HEK293 (cell line): ENCODE measurements at regions of chr9 and their contacts with region 1.

Region 1: GRCh38 chr9:129737479-129738274 is 15.2 kb downstream of the PTGES start:
- H3K4me3 ChIP-seq: peak overlapping the region; percentile 40
- H3K27ac ChIP-seq: no peak overlapping the region; the same call in 1 of the 2 replicates
- H3K4me1 ChIP-seq: no peaks in the 10 kb centered on the region
- CTCF ChIP-seq: peak; percentile 90

Region 2: DNA sequence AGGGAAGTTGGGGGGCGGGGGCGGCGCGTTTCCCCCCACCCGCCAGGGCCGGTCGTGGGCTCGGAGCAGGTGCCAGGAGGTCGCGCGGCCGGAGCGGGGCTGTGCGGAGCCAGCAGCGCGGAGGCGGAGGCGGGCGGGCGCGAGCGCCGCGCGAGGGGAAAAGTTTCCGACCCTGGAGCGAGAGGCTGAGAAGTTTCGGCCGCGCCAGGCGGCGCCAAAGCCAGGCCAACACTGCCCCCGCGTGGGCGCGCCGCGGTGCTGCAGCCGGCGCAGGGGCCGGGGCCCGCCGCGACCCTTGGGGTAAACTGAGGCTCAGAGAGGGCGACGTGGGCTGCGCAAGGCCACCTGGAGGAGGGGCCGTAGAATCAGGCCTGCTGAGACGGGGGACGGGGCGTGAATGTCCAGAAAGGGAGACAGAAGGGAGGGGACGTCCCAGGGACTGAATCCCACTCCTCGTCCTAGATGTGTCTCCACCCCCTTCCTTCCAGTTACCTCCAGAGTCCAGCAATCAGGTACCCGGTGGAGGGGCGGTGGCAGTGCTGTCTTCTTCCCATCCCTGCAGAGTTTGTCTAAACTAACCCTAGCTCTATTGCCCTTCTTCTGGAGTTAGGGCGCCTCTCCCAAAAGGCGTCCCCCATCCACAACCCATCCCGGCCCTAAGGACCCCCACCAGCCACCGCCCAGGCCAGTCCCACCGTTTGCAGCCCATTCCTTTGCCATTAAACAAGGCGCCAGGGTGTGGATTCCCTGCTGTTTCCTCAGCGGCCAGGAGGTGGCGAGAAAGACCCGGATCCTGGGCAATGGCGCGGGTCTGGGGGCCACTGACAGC is 127.0 kb before region 1 on chr9:
- CTCF ChIA-PET with region 1: no interaction called
- POLR2A ChIA-PET with region 1: no interaction called
- H3K4me3 ChIP-seq: peak overlapping the region; percentile 44
- H3K27ac ChIP-seq: peak overlapping the region; percentile 49; the same call in 1 of the 2 replicates
- H3K4me1 ChIP-seq: no peaks in the 10 kb centered on the region; the same call in 1 of the 2 replicates
- CTCF ChIP-seq: peak; percentile 76; the same call in 1 of the 2 replicates

Region 3: GRCh38 chr9:129641746-129642513 is 95.7 kb before region 1 on chr9 and contains the start of gene ASB6:
- CTCF ChIA-PET with region 1: interaction called, 16 read pairs
- POLR2A ChIA-PET with region 1: interaction called, 3 read pairs
- H3K4me3 ChIP-seq: peak within 1 kb of the TSS; percentile 79
- H3K27ac ChIP-seq: peak within 1 kb of the TSS; percentile 70
- H3K4me1 ChIP-seq: peaks cover 11% of the 10 kb centered on the region
- CTCF ChIP-seq: peak; percentile 100

Region 4: GRCh38 chr9:129720181-129720864 is 17.4 kb before region 1 on chr9:
- CTCF ChIA-PET with region 1: interaction called, 124 read pairs
- POLR2A ChIA-PET with region 1: no interaction called
- H3K4me3 ChIP-seq: no peak overlapping the region
- H3K27ac ChIP-seq: no peak overlapping the region
- H3K4me1 ChIP-seq: no peaks in the 10 kb centered on the region
- CTCF ChIP-seq: peak; percentile 40; the same call in 1 of the 2 replicates

Region 5: DNA sequence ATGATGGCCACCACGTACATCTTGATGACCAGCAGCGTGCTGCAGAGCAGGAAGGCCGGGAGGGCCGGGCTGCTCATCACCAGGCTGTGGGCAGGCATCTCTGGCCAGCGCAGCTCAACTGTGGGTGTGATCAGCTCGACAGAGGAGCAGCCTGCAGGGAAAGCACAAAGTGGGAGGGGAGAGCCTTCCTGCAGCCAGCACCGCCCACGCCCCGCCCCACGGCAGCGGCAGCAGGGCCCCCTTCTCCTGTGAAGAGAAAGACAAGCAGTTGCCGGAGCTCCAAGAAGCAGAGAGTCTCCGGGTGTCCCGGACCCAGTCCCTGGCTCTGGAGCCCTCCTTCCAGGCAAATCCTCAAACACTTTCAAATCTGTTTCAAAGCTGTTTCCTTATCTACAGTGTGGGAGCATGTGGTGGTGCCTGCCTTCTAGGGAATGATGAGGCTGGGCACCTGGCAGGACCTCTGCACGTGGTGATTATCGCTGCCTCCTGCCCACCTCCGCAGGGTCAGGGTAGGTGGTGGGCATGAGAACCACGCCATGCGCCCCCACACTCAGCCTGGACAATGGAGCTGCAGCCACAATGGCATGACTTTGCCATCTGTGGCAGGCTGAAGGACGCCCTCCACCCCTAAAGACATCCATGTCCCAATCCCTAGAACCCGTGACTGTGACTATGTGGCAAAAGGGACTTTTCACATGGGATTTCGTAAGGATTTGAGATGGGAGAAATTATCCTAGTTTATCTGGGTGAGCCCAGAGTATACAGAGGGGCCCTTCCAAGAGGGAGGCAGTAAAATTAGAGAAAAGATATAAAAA is 15.4 kb after region 1 on chr9 and contains the start of gene PTGES:
- CTCF ChIA-PET with region 1: interaction called, 62 read pairs
- POLR2A ChIA-PET with region 1: interaction called, 12 read pairs
- H3K4me3 ChIP-seq: no peak within 1 kb of the TSS
- H3K27ac ChIP-seq: no peak within 1 kb of the TSS
- H3K4me1 ChIP-seq: no peaks in the 10 kb centered on the region
- CTCF ChIP-seq: no peak

Region 6: GRCh38 chr9:129769669-129770068 is 32.0 kb after region 1 on chr9:
- CTCF ChIA-PET with region 1: interaction called, 27 read pairs
- POLR2A ChIA-PET with region 1: interaction called, 3 read pairs
- H3K4me3 ChIP-seq: no peak overlapping the region
- H3K27ac ChIP-seq: no peak overlapping the region
- H3K4me1 ChIP-seq: no peaks in the 10 kb centered on the region
- CTCF ChIP-seq: no peak

Region 7: DNA sequence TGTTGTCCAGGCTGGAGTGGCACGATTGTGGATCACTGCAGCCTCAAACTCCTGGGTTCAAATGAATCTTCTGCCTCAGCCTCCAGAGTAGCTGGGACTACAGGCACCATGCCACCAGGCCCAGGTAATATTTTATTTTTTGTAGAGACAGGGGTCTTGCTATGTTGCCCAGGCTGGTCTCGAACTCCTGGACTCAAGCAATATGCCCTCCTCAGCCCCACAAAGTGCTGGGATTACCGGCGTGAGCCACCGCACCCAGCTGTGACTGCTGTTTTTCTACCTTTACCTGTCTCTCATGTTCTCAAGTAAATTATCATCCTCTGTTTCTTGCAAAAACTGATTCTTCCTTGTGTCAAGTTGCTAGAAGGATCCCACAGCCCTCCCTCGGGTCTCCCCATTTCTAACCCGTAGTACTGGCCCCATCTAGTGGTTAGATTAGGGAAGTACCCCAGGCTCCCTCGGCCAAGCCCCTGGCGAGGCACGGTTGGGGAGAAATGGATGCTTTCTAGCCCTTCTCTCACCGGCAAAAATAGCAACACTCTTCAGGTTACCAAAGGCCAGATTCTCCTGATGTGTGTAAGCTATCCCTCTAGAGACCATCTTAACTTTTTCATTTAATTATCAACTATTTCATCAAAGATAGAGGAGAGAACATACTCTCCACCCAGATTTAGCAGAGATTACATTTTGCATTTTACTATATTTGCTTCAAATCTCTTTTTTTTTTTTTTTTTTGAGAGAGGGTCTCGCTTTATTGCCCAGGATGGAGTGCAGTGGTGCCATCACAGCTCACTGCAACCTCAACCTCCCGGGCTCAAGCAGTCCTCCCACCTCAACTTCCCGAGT is 46.1 kb after region 1 on chr9:
- CTCF ChIA-PET with region 1: interaction called, 220 read pairs
- POLR2A ChIA-PET with region 1: interaction called, 4 read pairs
- H3K4me3 ChIP-seq: no peak overlapping the region
- H3K27ac ChIP-seq: no peak overlapping the region
- H3K4me1 ChIP-seq: no peaks in the 10 kb centered on the region
- CTCF ChIP-seq: peak; percentile 74

Region 8: GRCh38 chr9:129962889-129963703 is 225.4 kb after region 1 on chr9:
- CTCF ChIA-PET with region 1: no interaction called
- POLR2A ChIA-PET with region 1: no interaction called
- H3K4me3 ChIP-seq: peak overlapping the region; percentile 21
- H3K27ac ChIP-seq: no peak overlapping the region
- H3K4me1 ChIP-seq: peaks cover 5% of the 10 kb centered on the region; the same call in 1 of the 2 replicates
- CTCF ChIP-seq: no peak